MCF 10A (cell line): ENCODE measurements at regions of chr9 and their contacts with region 1.

Region 1: DNA sequence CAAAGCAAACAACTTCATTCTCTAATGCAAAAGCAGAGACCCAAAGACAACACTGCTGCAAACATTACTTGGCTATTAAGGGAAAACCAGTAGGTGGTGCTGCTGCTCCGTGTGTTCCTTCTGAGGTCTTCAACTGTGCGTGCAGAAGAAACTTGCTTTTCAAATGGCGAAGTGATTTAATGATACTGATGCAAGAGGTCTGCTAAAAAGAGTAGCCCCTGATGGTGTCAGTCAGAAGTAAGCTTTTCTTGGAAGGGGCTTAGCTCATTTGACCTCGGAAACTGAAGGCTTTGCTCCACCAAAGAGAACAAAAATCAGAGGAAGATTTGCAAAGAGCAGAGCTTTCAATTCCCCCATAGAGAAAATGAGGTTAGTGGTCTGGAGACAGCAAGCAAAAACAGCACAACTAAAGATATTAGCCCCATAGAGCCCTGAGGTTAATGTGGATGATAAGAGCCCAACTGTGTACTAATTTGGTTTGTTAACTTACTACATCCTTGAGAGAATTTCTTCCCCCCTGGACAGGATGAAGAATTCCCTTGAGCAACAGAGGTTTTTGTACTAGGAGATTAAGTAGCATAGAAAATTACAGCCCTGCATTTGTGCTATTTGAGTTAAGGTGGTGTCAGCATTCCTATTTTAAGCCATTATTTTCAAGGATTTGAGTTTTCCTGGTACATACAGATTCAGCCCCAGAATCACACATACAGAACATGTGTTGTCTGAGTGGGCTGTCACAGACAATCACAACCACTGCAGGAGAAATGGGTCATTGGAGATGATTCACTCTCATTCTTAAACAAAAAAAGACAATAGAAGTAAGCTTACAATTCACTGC is 153.2 kb upstream of the C9orf72 start:
- DNase-seq: peak; percentile 80
- H3K4me3 Mint-ChIP-seq: no peak overlapping the region
- H3K27ac Mint-ChIP-seq: no peak overlapping the region
- H3K4me1 Mint-ChIP-seq: peaks cover 5% of the 10 kb centered on the region
- H3K27me3 Mint-ChIP-seq: peaks cover 59% of the 10 kb centered on the region
- CTCF ChIP-seq: peak; percentile 85

Region 2: DNA sequence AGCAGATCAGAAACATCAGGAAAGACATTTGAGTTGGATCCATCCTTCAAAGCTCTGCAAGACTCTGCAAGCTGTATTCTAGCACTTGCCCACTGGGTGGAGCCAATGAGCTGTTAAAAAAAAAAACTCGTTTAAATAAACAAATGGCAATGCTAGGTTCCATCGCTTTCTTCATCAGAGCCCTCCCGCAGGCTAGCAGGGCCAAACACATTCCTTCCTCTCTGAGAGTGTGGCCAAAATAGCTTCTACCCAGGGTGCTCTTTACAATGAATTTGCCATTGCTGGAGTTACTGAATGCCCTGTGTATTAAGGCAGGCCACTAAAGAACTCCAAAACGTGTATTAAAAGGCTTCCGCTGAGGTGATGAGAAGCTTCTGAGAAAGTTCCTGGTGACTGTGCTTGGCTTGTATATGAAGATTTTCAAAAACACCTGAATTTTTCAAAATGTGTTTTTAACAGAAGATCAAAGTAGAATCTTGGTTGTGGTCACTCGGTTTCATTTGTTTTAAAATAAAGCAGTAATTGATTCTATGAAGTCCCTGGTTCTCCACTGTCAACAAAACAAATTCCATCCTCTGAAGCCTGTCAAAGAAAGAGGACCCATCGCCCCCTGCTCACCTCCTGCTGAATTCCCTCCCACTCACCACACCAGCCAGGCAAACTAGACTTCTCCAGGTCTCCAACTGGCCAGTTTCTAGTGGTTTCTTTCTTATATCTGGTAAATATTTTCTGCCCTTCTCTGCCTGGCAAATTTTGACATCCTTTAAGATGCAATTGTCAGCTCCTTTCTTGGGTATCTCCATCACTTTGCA is 393.0 kb before region 1 on chr9:
- CTCF ChIA-PET with region 1: interaction called, 3 read pairs
- POLR2A ChIA-PET with region 1: no interaction called
- intact Hi-C with region 1: loop called (anchors 5 kb)
- DNase-seq: peak; percentile 78
- H3K4me3 Mint-ChIP-seq: no peak overlapping the region
- H3K27ac Mint-ChIP-seq: no peak overlapping the region
- H3K4me1 Mint-ChIP-seq: peaks cover 22% of the 10 kb centered on the region
- H3K27me3 Mint-ChIP-seq: no peaks in the 10 kb centered on the region
- CTCF ChIP-seq: peak; percentile 82

Region 3: GRCh38 chr9:27505744-27506161 is 220.7 kb before region 1 on chr9:
- CTCF ChIA-PET with region 1: no interaction called
- POLR2A ChIA-PET with region 1: no interaction called
- intact Hi-C with region 1: no loop called
- DNase-seq: peak; percentile 51
- H3K4me3 Mint-ChIP-seq: peak overlapping the region; percentile 16
- H3K27ac Mint-ChIP-seq: peak overlapping the region; percentile 5
- H3K4me1 Mint-ChIP-seq: peaks cover 27% of the 10 kb centered on the region
- H3K27me3 Mint-ChIP-seq: no peaks in the 10 kb centered on the region
- CTCF ChIP-seq: no peak

Region 4: DNA sequence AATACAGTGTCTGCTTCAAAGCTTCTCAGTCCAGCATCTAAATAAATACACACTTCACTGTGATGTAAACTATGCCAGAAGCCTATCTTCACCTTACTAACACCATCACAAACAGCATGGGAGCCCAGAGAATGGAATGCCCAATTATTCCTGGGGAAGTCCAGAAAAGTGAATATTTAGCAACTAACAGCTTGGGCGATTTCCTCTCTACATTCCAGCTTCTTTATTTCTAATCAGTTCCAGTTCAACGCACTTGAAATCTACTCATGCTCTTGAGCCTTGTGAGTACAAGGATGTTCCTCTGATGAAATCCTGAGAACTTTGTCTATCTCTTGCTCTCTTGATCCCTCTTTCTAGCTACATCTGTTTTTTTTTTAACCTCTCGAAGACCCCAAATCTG is 52.8 kb before region 1 on chr9:
- CTCF ChIA-PET with region 1: no interaction called
- POLR2A ChIA-PET with region 1: no interaction called
- intact Hi-C with region 1: no loop called
- DNase-seq: no peak
- H3K4me3 Mint-ChIP-seq: no peak overlapping the region
- H3K27ac Mint-ChIP-seq: no peak overlapping the region
- H3K4me1 Mint-ChIP-seq: no peaks in the 10 kb centered on the region
- H3K27me3 Mint-ChIP-seq: peaks cover 13% of the 10 kb centered on the region
- CTCF ChIP-seq: no peak

Region 5: GRCh38 chr9:27888661-27889295 is 162.3 kb after region 1 on chr9:
- CTCF ChIA-PET with region 1: interaction called, 4 read pairs
- POLR2A ChIA-PET with region 1: no interaction called
- intact Hi-C with region 1: loop called (anchors 1 kb)
- DNase-seq: peak; percentile 29
- H3K4me3 Mint-ChIP-seq: no peak overlapping the region
- H3K27ac Mint-ChIP-seq: no peak overlapping the region
- H3K4me1 Mint-ChIP-seq: no peaks in the 10 kb centered on the region
- H3K27me3 Mint-ChIP-seq: peaks cover 26% of the 10 kb centered on the region
- CTCF ChIP-seq: peak; percentile 75

Region 6: GRCh38 chr9:28774416-28775235 is 1048.2 kb after region 1 on chr9:
- CTCF ChIA-PET with region 1: no interaction called
- POLR2A ChIA-PET with region 1: no interaction called
- intact Hi-C with region 1: loop called (anchors 5 kb)
- DNase-seq: peak; percentile 54
- H3K4me3 Mint-ChIP-seq: no peak overlapping the region
- H3K27ac Mint-ChIP-seq: no peak overlapping the region
- H3K4me1 Mint-ChIP-seq: peaks cover 6% of the 10 kb centered on the region
- H3K27me3 Mint-ChIP-seq: no peaks in the 10 kb centered on the region
- CTCF ChIP-seq: peak; percentile 61

Region 7: DNA sequence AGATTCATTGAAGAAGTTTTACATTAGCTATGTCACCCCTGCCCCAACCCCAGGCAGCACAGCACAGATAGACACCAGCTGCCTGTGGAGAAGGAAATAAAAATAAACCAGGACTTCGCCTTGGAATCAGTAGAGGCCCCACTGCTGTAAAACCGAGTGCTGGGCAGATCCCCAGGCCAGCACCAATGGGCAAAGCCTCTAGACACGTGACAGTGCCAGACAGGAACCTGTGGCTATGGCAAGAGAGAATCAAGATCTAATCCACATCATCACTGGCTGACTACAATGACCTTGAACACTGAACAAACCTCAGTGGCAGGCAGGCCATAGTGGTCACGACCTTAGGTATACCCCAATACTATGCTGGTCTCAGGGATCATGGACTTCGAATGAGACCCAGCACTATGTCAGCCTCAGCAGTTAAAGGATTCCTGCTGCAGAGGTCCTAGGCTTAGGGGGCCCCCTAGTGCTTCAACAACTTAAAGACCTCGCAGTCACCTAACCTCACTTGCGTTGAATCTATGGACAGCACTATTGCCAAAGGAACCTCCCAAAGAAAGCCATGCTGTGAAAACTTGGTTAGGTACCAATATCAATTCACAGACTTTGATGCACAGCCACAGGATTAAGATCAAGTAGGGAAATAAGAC is 1965.4 kb after region 1 on chr9:
- CTCF ChIA-PET with region 1: no interaction called
- POLR2A ChIA-PET with region 1: no interaction called
- intact Hi-C with region 1: loop called (anchors 5 kb)
- DNase-seq: peak; percentile 73
- H3K4me3 Mint-ChIP-seq: no peak overlapping the region
- H3K27ac Mint-ChIP-seq: no peak overlapping the region
- H3K4me1 Mint-ChIP-seq: no peaks in the 10 kb centered on the region
- H3K27me3 Mint-ChIP-seq: no peaks in the 10 kb centered on the region
- CTCF ChIP-seq: peak; percentile 42